MCF 10A (cell line): ENCODE measurements at regions of chr7 and their contacts with region 1.

Region 1: GRCh38 chr7:50793115-50793946 is 10.6 kb upstream of the GRB10 start:
- DNase-seq: peak; percentile 62
- H3K4me3 Mint-ChIP-seq: peak overlapping the region; percentile 54
- H3K27ac Mint-ChIP-seq: no peak overlapping the region
- H3K4me1 Mint-ChIP-seq: peaks cover 13% of the 10 kb centered on the region
- H3K27me3 Mint-ChIP-seq: no peaks in the 10 kb centered on the region
- CTCF ChIP-seq: no peak

Region 2: DNA sequence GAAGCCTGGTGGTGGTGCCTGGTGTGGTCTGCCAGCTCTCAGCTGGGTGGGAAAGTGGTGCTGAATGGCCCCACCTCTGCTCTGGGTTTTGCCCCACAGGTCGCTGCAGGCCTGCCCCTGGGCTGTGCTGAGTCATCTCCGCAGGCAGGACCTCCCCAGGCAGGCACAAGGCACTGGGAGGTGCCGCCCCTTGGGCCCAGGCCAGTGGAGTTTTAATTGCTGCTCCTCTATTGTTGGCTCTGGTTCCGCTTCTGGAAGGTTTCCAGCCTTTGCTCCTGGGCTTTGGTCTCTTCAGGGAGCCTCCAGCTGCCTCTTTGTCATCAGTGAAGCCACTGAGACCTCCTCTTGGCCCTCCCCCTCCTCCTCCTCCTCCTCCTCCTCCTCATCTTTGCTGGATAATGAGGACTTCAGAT is 169.6 kb after region 1 on chr7:
- CTCF ChIA-PET with region 1: no interaction called
- POLR2A ChIA-PET with region 1: no interaction called
- intact Hi-C with region 1: loop called (anchors 5 kb)
- DNase-seq: peak; percentile 97
- H3K4me3 Mint-ChIP-seq: peak overlapping the region; percentile 51
- H3K27ac Mint-ChIP-seq: peak overlapping the region; percentile 55
- H3K4me1 Mint-ChIP-seq: peaks cover 18% of the 10 kb centered on the region
- H3K27me3 Mint-ChIP-seq: no peaks in the 10 kb centered on the region
- CTCF ChIP-seq: no peak